ENCODE measurements at regions of chr9 and their contacts with region 1.

Region 1: GRCh38 chr9:128034821-128035764 is 32.0 kb downstream of the NAIF1 start:
- ATAC-seq: peak; percentile 98 to 99 (median 99)
- H3K4me3 ChIP-seq: no peak overlapping the region
- H3K27ac ChIP-seq: no peak overlapping the region
- H3K4me1 ChIP-seq: peaks cover 0 to 3% of the 10 kb centered on the region in 2 donors

Region 2: GRCh38 chr9:127937388-127938280 is 97.5 kb before region 1 on chr9 and contains the start of gene DPM2:
- in situ Hi-C with region 1: loop called in 2 of 9 experiments (anchors 10 to 25 kb)
- ATAC-seq: peak; percentile 87 to 98 (median 92)
- H3K4me3 ChIP-seq: peak within 1 kb of the TSS; percentile 57 to 94 (median 80)
- H3K27ac ChIP-seq: peak within 1 kb of the TSS in 1 of 2 donors; percentile 20
- H3K4me1 ChIP-seq: peaks cover 9 to 17% of the 10 kb centered on the region in 2 donors
- total RNA-seq, gene DPM2: 22.5 to 37.6 (median 28.8) TPM

Region 3: GRCh38 chr9:127949827-127950512 is 85.1 kb before region 1 on chr9:
- in situ Hi-C with region 1: loop called in 2 of 9 experiments (anchors 5 to 25 kb)
- ATAC-seq: no peak
- H3K4me3 ChIP-seq: no peak overlapping the region
- H3K27ac ChIP-seq: peak overlapping the region; percentile 79 to 81
- H3K4me1 ChIP-seq: peaks cover 17 to 20% of the 10 kb centered on the region in 2 donors

Region 4: DNA sequence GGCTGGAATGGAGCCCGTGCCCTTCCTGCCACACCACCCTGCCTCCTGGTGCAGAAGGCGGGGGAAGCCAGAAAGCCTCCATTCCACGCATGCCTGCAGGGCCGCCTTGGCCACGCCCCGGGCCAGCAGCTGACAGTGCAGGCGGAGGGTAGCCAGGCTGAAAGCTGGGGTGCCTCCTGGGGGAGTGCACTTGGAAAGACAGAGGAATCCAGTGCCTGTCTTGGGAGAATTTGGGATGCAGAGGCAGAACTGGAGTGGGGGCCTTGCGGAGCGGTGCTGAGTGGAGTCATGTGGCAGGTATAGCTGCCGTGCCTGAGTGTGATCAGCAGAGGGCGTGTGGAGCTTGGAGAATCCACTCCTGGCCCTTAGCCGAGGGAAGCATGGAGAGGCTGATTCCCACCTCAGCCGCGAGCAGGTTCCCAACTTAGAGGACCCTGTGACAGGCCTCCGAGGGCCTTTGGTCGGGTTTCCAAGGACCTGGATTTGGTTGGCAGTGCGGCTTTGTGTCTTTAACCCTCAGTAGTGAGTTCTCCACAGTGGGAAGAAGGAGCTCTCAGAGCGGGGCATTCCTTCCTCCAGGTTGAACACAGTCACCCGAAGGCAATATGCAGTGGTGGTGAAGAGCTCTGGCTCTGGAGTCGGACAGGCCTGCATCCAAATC is 327.0 kb after region 1 on chr9:
- in situ Hi-C with region 1: no loop called
- ATAC-seq: peak; percentile 69 to 87 (median 74)
- H3K4me3 ChIP-seq: no peak overlapping the region
- H3K27ac ChIP-seq: peak overlapping the region; percentile 21 to 49
- H3K4me1 ChIP-seq: peaks cover 21 to 33% of the 10 kb centered on the region in 2 donors